ENCODE measurements at regions of chr18 and their contacts with region 1.

Region 1: GRCh38 chr18:11149441-11150270 is at the start of gene PIEZO2:
- DNase-seq: peak; percentile 31 to 67 (median 39)
- ATAC-seq: peak in 3 of 4 donors; percentile 74 to 78 (median 77)
- H3K4me3 ChIP-seq: peak within 1 kb of the TSS in 11 of 12 donors; percentile 30 to 55 (median 45)
- H3K27ac ChIP-seq: no peak within 1 kb of the TSS
- H3K4me1 ChIP-seq: peaks cover 0 to 22% (median 13%) of the 10 kb centered on the region in 12 donors
- H3K27me3 ChIP-seq: peaks cover 29 to 77% (median 48%) of the 10 kb centered on the region in 9 donors
- CTCF ChIP-seq: no peak
- POLR2A ChIP-seq: no peak
- total RNA-seq, gene PIEZO2: 0.06 to 4.9 (median 0.39) TPM in 7 of 9 donors, not detected in the others

Region 2: GRCh38 chr18:9971313-9971920 is 1178.2 kb before region 1 on chr18:
- intact Hi-C with region 1: loop called in 1 of 10 experiments (anchors 10 kb)
- DNase-seq: peak in 4 of 5 donors; percentile 47 to 73 (median 66)
- ATAC-seq: peak; percentile 12 to 76 (median 68)
- H3K4me3 ChIP-seq: no peak overlapping the region
- H3K27ac ChIP-seq: no peak overlapping the region
- H3K4me1 ChIP-seq: peaks cover 0 to 12% (median 0%) of the 10 kb centered on the region in 12 donors
- H3K27me3 ChIP-seq: no peaks in the 10 kb centered on the region
- CTCF ChIP-seq: peak; percentile 68 to 88 (median 81)
- POLR2A ChIP-seq: no peak

Region 3: DNA sequence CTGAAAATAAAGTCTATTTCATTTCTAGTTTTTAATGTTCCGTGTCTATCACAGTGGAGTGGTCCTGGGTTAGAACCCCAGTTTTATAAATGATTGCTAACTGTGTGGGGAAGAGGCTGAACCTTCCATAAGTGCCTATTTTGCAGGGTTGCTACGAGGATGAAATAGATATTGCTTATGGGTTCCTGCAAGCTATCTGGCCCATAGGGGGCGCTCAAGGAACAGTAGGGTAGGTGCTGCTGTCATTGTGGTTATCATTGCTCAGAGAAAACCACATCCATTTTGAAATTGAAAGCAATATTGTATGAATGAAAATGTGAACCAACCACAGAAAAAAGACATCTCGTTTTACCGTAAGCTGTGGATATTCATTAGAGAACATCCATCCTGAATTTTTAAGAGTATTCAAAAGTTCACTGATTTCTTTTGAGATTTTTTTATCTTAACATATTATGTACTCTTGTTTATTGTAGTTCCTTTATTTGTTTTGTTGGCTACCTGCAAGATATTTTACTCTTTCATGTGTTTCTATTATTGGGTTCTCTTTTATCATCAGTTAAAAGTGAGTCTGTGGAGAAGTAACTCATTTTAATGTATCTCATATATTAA is 362.3 kb before region 1 on chr18:
- intact Hi-C with region 1: loop called in 1 of 10 experiments (anchors 10 kb)
- DNase-seq: peak; percentile 52 to 83 (median 66)
- ATAC-seq: peak in 1 of 4 donors; percentile 63
- H3K4me3 ChIP-seq: no peak overlapping the region
- H3K27ac ChIP-seq: no peak overlapping the region
- H3K4me1 ChIP-seq: peaks cover 0 to 6% (median 0%) of the 10 kb centered on the region in 12 donors
- H3K27me3 ChIP-seq: no peaks in the 10 kb centered on the region
- CTCF ChIP-seq: peak; percentile 46 to 77 (median 63)
- POLR2A ChIP-seq: no peak

Region 4: DNA sequence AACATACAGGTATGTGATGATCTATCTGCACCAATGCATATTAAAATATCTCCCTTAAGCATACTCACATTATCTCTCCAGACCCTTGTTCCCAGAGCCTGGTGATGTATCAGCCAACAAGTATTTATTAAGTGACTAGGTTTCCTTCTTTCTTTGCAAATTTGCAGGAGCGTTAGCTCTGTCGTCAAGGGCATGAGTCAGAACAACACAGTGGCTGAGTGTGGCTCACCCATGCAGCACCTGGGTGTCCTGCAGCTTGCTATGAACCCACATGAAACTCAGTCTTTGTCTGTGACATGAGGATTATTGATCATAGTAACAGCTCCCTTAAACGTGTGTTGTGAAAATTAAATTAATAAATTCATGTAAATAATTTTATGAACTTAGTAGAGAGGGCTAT is 96.9 kb before region 1 on chr18:
- intact Hi-C with region 1: loop called in 1 of 10 experiments (anchors 5 kb)
- DNase-seq: no peak
- ATAC-seq: no peak
- H3K4me3 ChIP-seq: no peak overlapping the region
- H3K27ac ChIP-seq: no peak overlapping the region
- H3K4me1 ChIP-seq: no peaks in the 10 kb centered on the region
- H3K27me3 ChIP-seq: peaks cover 0 to 3% (median 0%) of the 10 kb centered on the region in 9 donors
- CTCF ChIP-seq: no peak
- POLR2A ChIP-seq: no peak

Region 5: DNA sequence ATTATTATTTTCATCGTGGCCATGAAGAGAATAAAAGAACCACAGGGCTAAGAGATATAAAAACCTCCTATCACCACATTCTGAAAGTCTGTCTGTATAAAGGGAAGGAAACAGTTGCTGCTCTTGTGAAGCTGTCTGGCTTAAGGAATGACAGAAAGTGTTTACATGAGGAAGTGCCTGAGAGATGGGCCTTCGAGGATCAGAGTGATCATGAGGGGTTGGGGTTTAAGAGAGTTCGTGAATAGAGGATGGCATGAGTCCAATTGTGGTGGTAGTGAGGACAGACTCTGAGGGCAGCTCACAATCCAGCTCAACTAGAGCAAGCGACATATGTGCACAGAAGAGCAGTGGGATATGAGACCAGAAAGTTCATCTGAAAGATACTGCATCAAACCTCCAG is 65.6 kb after region 1 on chr18:
- intact Hi-C with region 1: no loop called
- DNase-seq: no peak
- ATAC-seq: no peak
- H3K4me3 ChIP-seq: no peak overlapping the region
- H3K27ac ChIP-seq: no peak overlapping the region
- H3K4me1 ChIP-seq: no peaks in the 10 kb centered on the region
- H3K27me3 ChIP-seq: no peaks in the 10 kb centered on the region
- CTCF ChIP-seq: no peak
- POLR2A ChIP-seq: no peak